BJ (cell line): ENCODE measurements at regions of chr11 and their contacts with region 1.

Region 1: DNA sequence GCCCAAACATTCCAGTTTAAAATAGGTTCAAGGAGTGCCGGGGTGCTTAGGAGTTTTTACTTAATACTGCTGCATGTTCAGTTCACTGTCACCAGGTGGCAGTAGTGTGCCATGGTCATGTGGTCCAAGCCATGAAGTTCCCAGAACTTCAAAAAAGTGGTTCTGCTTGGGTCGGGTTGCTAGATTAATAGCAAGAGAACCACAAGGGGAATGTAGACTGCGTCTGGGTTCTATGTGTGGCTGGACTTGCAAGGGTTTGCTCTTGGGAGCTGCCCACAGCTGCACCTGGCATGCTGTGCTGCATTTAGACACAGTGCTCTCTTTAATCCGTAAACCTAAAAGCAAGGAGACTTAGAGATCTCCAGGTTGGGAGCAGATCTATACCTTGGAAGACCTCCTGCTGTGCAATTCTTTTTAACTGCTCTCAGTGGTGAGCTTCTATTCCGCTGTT is 6.5 kb upstream of the SPON1 start:
- DNase-seq: no peak
- H3K4me3 ChIP-seq: no peak overlapping the region
- H3K27me3 ChIP-seq: peaks cover 20% of the 10 kb centered on the region
- CTCF ChIP-seq: peak; percentile 87

Region 2: GRCh38 chr11:13970986-13971385 is 15.0 kb after region 1 on chr11:
- CTCF ChIA-PET with region 1: interaction called, 12 read pairs
- POLR2A ChIA-PET with region 1: no interaction called
- DNase-seq: no peak
- H3K4me3 ChIP-seq: no peak overlapping the region
- H3K27me3 ChIP-seq: peaks cover 8% of the 10 kb centered on the region
- CTCF ChIP-seq: peak; percentile 28; the same call in 1 of the 2 replicates

Region 3: DNA sequence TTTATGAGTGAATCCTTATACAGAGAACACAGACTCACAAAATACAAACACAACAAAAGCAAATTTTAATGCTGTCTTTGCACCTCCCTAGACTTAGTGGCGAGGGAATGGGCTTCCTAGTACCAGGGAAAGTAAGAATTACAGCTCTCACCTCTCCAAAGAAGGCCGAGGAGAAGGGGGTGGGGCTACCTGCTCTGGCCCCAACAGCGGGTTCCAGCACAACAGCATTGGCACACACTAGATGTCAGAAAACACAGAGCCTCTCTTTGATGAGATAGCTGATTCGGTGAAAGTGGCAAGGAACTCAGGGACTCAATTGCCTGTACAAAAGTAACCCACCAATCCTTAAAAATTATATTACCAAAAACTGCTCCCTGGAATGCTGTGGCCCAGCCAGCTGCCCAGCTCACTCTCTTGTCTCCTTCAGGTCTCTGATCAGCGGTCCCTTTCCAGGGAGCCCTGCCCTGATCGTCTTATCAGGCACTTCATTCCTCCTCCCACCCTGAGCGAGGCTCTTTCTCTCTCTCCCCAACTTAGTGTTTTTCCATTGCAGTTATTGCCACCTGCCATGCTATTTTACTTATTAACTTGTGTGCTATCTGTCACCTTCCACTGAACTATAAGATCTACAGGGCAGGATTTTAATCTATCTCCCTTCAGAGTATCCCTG is 37.2 kb after region 1 on chr11:
- CTCF ChIA-PET with region 1: no interaction called
- POLR2A ChIA-PET with region 1: no interaction called
- DNase-seq: no peak
- H3K4me3 ChIP-seq: no peak overlapping the region
- H3K27me3 ChIP-seq: no peaks in the 10 kb centered on the region
- CTCF ChIP-seq: no peak

Region 4: GRCh38 chr11:14148653-14149273 is 192.8 kb after region 1 on chr11:
- CTCF ChIA-PET with region 1: interaction called, 83 read pairs
- POLR2A ChIA-PET with region 1: no interaction called
- DNase-seq: no peak
- H3K4me3 ChIP-seq: no peak overlapping the region
- H3K27me3 ChIP-seq: no peaks in the 10 kb centered on the region
- CTCF ChIP-seq: peak; percentile 54

Region 5: DNA sequence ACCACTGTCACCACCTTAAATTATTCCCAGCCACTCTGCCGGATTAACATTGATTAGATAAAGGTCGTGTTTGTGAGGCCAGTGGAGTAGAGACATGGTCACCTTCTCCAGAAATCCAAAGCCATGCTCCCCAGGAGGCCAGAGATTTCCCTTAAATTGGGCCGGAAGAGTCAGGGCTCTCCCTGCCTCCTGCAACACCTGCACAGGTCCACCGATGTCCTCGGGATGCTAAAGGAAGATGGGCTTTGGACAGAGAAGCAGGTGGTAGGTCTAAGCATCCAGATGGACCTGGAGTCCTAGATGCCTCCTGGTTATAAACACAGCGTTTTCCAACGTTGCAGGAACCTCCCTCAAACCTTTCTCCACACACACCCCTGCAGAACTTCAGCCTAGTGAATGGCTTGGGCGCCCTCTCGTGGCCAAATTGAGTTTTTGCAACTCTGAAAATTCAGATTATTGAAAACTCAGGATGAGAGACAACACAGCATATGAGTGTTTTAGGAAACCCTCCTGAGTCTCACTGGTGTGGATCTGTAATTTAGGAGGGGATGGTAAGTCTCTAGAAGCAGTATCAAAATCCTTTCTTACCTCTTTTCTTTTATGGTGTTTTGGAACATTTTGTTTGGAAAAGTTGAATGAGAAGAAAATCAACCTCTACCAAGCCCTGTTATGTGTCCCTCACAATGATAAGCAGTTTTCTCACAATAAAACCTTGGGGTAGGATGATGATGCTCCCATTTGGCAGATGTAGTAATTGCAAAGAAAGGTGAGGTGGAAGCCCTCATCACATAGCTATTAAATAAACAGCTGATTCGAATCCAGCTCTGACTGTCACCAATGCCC is 293.3 kb after region 1 on chr11:
- CTCF ChIA-PET with region 1: interaction called, 16 read pairs
- POLR2A ChIA-PET with region 1: no interaction called
- DNase-seq: no peak
- H3K4me3 ChIP-seq: no peak overlapping the region
- H3K27me3 ChIP-seq: peaks cover 13% of the 10 kb centered on the region
- CTCF ChIP-seq: peak; percentile 82